ENCODE measurements at regions of chr4 and their contacts with region 1.

Region 1: GRCh38 chr4:156968479-156968984 is 3.1 kb downstream of the PDGFC start:
- DNase-seq: peak; percentile 55
- H3K4me3 ChIP-seq: peak overlapping the region; percentile 65 to 75
- H3K27ac ChIP-seq: no peak overlapping the region
- H3K4me1 ChIP-seq: no peaks in the 10 kb centered on the region
- H3K27me3 ChIP-seq: no peaks in the 10 kb centered on the region
- CTCF ChIP-seq: peak; percentile 50 to 79 (median 72)
- POLR2A ChIP-seq: no peak

Region 2: DNA sequence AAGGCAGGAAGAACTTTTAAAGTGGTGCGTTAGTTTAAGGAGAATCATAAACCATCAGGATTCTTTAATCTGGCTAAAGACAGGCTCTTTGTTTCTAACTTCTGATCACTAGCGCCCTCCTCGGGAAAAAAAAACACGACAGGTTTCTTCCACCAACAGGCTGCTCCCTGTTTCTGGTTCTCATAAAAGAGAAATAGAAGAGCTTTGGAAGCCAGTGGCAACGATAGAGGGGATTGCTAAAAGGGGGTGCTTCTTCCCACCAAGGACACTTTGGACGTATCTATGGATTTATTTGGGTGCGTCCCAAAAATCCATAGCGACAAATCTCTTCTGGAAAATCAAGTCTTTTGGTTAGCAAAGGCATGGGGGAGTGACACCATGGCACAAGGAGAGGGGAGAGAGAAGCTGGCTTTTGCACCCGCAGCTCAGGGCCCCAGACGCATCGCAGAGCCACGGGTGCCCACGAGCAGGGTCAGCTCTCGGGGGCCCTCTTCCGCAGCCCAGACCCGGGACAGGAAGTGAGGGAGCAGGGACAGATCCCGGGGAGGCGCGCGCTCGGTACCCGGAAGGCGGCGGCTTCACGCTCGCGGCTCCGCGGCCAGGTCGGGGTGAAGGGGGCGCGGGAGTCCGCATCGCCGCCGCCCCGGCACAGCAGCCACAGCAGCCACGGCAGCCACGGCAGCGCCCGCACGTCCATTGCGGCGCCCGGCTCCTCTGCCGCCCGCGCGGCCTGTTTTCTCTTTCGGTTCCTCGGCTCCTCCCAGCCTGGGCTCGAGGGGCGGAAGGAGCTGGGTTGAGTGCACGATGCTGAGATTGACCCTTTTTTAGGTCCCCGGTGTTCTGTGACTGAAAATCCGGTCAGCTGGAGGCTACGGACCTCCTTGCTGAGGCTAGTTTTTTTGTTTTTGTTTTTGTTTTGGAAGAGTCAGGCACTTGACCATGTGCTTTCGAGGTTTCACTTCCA is 1015.1 kb before region 1 on chr4 and contains the start of gene CTSO:
- intact Hi-C with region 1: loop called (anchors 10 kb)
- DNase-seq: peak; percentile 68
- H3K4me3 ChIP-seq: peak within 1 kb of the TSS; percentile 86 to 92
- H3K27ac ChIP-seq: peak within 1 kb of the TSS; percentile 99
- H3K4me1 ChIP-seq: no peaks in the 10 kb centered on the region
- H3K27me3 ChIP-seq: no peaks in the 10 kb centered on the region
- CTCF ChIP-seq: peak; percentile 37 to 67 (median 57)
- POLR2A ChIP-seq: peak; percentile 34
- total RNA-seq, gene CTSO: 24.9 to 37.5 TPM

Region 3: GRCh38 chr4:156294577-156294976 is 674.0 kb before region 1 on chr4:
- intact Hi-C with region 1: loop called (anchors 5 kb)
- DNase-seq: no peak
- H3K4me3 ChIP-seq: no peak overlapping the region
- H3K27ac ChIP-seq: no peak overlapping the region
- H3K4me1 ChIP-seq: no peaks in the 10 kb centered on the region
- H3K27me3 ChIP-seq: no peaks in the 10 kb centered on the region
- CTCF ChIP-seq: peak in 1 of 4 experiments; percentile 5
- POLR2A ChIP-seq: no peak

Region 4: GRCh38 chr4:156475322-156475721 is 493.2 kb before region 1 on chr4:
- intact Hi-C with region 1: loop called (anchors 5 kb)
- DNase-seq: peak; percentile 8
- H3K4me3 ChIP-seq: no peak overlapping the region
- H3K27ac ChIP-seq: no peak overlapping the region
- H3K4me1 ChIP-seq: no peaks in the 10 kb centered on the region
- H3K27me3 ChIP-seq: no peaks in the 10 kb centered on the region
- CTCF ChIP-seq: peak in 3 of 4 experiments; percentile 40 to 74 (median 73)
- POLR2A ChIP-seq: no peak

Region 5: GRCh38 chr4:156594624-156595023 is 373.9 kb before region 1 on chr4:
- intact Hi-C with region 1: loop called (anchors 5 kb)
- DNase-seq: peak; percentile 17
- H3K4me3 ChIP-seq: no peak overlapping the region
- H3K27ac ChIP-seq: no peak overlapping the region
- H3K4me1 ChIP-seq: peaks cover 7% of the 10 kb centered on the region
- H3K27me3 ChIP-seq: no peaks in the 10 kb centered on the region
- CTCF ChIP-seq: no peak
- POLR2A ChIP-seq: no peak

Region 6: DNA sequence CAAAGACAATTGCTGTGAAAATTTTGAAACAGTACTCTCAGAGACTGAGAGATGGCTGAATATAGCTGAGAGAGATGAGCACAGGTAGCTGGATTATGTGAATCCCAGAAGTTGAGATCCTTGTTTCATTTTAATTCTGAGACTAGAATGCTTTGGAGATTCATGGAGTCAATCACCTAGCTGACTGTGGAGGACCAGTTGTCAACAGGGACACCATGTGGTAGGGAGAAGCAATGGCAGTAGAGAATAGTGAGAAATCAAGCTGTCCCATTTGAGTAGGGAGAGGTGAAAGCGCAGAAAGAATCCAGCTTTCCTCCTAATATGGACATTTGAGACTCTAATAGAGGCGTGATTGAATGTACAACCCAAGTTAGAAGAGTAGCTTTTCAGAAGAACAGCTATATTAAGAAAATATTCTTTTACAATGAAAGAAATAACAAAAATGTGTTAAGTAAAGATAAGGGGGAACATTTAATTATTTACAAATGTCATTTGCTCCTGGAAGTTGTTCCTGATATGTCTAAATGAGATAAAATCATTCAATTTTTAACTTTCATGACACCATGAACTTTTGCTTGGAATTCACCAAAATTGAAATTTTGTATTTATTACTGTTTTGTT is 77.1 kb after region 1 on chr4:
- intact Hi-C with region 1: loop called (anchors 2 kb)
- DNase-seq: peak; percentile 22
- H3K4me3 ChIP-seq: no peak overlapping the region
- H3K27ac ChIP-seq: no peak overlapping the region
- H3K4me1 ChIP-seq: no peaks in the 10 kb centered on the region
- H3K27me3 ChIP-seq: no peaks in the 10 kb centered on the region
- CTCF ChIP-seq: peak in 3 of 4 experiments; percentile 62 to 80 (median 72)
- POLR2A ChIP-seq: no peak

Region 7: DNA sequence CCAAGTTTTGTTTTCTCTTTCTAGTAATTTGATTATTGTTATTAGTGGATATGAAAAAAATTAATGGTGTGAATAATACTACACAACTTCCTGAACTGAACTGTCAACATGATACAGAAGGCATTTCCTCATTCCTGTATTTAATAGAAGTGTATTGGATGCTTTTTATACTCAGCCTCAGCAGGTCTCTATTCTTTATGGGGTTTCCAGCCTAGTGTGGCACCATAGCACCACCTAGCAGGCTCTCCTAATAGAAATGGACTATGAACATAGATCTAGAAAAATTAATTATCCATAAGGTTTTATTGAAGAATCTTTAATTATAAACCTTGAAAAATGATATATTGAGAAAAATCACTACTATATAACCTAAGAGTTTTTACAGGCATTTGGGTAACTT is 159.9 kb after region 1 on chr4:
- intact Hi-C with region 1: loop called (anchors 10 kb)
- DNase-seq: no peak
- H3K4me3 ChIP-seq: no peak overlapping the region
- H3K27ac ChIP-seq: no peak overlapping the region
- H3K4me1 ChIP-seq: no peaks in the 10 kb centered on the region
- H3K27me3 ChIP-seq: no peaks in the 10 kb centered on the region
- CTCF ChIP-seq: peak in 1 of 4 experiments; percentile 42
- POLR2A ChIP-seq: no peak